ENCODE measurements at regions of chr9 and their contacts with region 1.

Region 1: GRCh38 chr9:85425153-85425611 is 316.6 kb downstream of the AGTPBP1 start:
- DNase-seq: peak; percentile 85
- H3K4me3 Mint-ChIP-seq: no peak overlapping the region
- H3K27ac Mint-ChIP-seq: no peak overlapping the region
- H3K4me1 Mint-ChIP-seq: peaks cover 2% of the 10 kb centered on the region
- H3K27me3 Mint-ChIP-seq: peaks cover 7% of the 10 kb centered on the region

Region 2: DNA sequence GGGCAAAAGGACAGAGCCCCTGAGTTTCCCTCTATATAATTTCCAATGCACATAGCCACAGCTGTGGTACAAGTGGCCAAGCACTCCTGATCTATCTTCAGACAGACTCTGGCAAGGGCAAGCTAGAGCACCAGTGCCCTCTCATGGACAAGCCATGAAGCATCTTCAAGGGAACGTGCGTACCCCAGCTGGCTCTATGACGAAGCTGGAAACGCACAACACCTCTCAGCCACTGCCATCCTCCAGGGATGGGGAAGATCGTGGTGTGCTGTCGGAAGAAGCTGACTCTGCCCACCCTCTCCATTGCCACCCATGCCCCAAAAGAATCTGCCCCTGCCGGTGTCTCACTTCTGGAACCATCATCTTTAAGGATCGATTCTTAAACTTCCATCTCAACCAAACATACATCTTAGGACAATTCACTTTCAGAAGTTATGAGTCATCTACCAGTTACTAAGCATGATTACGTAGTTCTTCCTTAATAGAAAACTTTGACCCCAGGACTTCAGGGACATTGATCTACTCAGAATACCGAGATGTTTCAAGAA is 166.3 kb before region 1 on chr9:
- intact Hi-C with region 1: no loop called
- DNase-seq: peak; percentile 65
- H3K4me3 Mint-ChIP-seq: no peak overlapping the region
- H3K27ac Mint-ChIP-seq: no peak overlapping the region
- H3K4me1 Mint-ChIP-seq: no peaks in the 10 kb centered on the region
- H3K27me3 Mint-ChIP-seq: no peaks in the 10 kb centered on the region

Region 3: DNA sequence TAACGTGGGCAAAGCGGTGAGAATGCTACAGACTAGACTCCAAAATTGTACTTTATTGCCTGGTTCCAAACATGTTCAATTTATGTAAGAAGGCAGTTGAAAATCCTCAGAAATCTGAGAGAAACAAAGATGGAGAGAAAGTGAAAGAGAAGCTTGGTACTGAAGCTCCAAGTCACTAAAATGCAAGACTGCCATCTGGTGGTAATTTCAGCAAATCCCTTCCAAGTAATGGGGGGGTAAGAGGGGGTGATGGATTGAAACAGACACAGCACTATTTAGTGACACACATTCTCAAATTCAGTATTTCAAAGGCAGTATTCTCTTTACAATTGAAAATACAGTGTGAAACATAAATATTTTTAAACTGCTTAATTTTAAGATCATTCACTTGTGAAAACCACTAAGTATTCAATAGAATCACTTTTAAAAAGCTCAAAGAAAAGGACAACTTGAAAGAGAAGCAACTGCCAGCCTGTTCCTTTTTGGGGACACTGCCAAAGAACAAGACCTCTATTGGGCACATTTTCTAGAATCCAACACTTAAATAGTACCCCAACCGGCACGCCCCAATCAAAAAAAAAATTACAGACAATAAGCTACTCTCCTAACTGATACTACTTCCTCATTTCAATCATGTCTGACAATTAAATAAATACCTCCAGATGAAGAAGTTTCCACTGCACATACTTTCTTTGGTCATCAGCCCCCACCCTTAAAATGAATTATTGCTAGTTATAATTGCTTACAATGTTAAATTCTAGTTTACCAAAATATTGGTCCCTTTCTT is 185.1 kb after region 1 on chr9:
- intact Hi-C with region 1: loop called (anchors 10 kb)
- DNase-seq: peak; percentile 86
- H3K4me3 Mint-ChIP-seq: peak overlapping the region; percentile 33
- H3K27ac Mint-ChIP-seq: no peak overlapping the region
- H3K4me1 Mint-ChIP-seq: peaks cover 4% of the 10 kb centered on the region
- H3K27me3 Mint-ChIP-seq: no peaks in the 10 kb centered on the region